MCF 10A (cell line): ENCODE measurements at regions of chr2 and their contacts with region 1.

Region 1: DNA sequence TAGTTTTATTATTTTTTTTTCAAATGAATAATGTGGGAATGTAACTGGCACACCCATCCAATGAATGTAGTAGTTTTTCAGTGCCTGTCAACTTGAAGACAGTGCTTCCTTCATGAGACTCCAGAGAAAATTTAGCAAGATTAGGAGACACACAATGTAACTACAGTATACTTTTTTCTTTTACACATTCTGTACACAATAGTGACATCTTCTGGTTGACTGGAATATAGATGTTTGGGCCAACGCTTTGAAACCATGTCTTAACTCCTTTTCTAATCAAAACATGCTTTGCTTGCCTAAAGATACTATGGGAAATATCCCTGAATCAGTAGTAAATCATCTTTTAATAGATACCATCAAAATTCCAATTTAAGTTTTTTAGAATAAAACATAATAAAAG is 229.5 kb upstream of the ZC3H15 start:
- DNase-seq: peak; percentile 60
- H3K4me3 Mint-ChIP-seq: no peak overlapping the region
- H3K27ac Mint-ChIP-seq: no peak overlapping the region
- H3K4me1 Mint-ChIP-seq: no peaks in the 10 kb centered on the region
- H3K27me3 Mint-ChIP-seq: no peaks in the 10 kb centered on the region
- CTCF ChIP-seq: peak; percentile 54

Region 2: GRCh38 chr2:185208261-185208660 is 1048.3 kb before region 1 on chr2:
- CTCF ChIA-PET with region 1: no interaction called
- POLR2A ChIA-PET with region 1: no interaction called
- intact Hi-C with region 1: loop called (anchors 1 kb)
- DNase-seq: peak; percentile 73
- H3K4me3 Mint-ChIP-seq: no peak overlapping the region
- H3K27ac Mint-ChIP-seq: no peak overlapping the region
- H3K4me1 Mint-ChIP-seq: no peaks in the 10 kb centered on the region
- H3K27me3 Mint-ChIP-seq: no peaks in the 10 kb centered on the region
- CTCF ChIP-seq: peak; percentile 50

Region 3: GRCh38 chr2:185608799-185609198 is 647.7 kb before region 1 on chr2:
- CTCF ChIA-PET with region 1: interaction called, 4 read pairs
- POLR2A ChIA-PET with region 1: no interaction called
- intact Hi-C with region 1: loop called (anchors 1 kb)
- DNase-seq: peak; percentile 45
- H3K4me3 Mint-ChIP-seq: no peak overlapping the region
- H3K27ac Mint-ChIP-seq: no peak overlapping the region
- H3K4me1 Mint-ChIP-seq: peaks cover 7% of the 10 kb centered on the region
- H3K27me3 Mint-ChIP-seq: no peaks in the 10 kb centered on the region
- CTCF ChIP-seq: peak; percentile 42

Region 4: GRCh38 chr2:185738679-185739472 is 517.7 kb before region 1 on chr2 and contains the start of gene FSIP2:
- CTCF ChIA-PET with region 1: interaction called, 3 read pairs
- POLR2A ChIA-PET with region 1: no interaction called
- intact Hi-C with region 1: loop called (anchors 5 kb)
- DNase-seq: peak; percentile 65
- H3K4me3 Mint-ChIP-seq: peak within 1 kb of the TSS; percentile 58
- H3K27ac Mint-ChIP-seq: no peak within 1 kb of the TSS
- H3K4me1 Mint-ChIP-seq: no peaks in the 10 kb centered on the region
- H3K27me3 Mint-ChIP-seq: no peaks in the 10 kb centered on the region
- CTCF ChIP-seq: peak; percentile 49
- total RNA-seq, gene FSIP2: 0.12 and 0.20 TPM in 2 replicates

Region 5: DNA sequence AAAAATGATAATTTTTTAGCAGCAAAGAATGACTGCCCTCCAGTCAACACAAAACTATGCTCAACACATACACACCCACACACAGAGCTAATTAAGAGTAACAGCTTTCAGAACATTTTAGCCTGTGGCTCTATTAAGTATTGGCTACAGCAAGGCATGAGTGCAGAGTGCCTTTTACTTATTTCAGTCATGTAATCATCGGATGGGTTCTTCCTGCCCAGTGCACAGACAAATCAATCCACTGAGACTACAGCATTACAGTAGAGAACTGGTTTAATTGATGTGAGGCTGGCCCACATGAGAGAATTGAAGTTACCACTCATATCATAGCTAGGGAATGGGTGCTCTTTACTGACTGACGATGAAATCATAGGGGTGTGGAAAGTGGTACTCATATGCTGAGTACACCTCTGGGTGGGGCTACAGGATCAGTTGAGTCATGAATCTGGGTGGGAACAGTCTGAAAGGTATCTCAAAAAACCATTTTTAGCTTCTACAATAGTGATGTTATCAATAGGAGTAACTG is 276.9 kb before region 1 on chr2:
- CTCF ChIA-PET with region 1: interaction called, 8 read pairs
- POLR2A ChIA-PET with region 1: no interaction called
- intact Hi-C with region 1: loop called (anchors 1 kb)
- DNase-seq: peak; percentile 66
- H3K4me3 Mint-ChIP-seq: no peak overlapping the region
- H3K27ac Mint-ChIP-seq: peak overlapping the region; percentile 43
- H3K4me1 Mint-ChIP-seq: peaks cover 17% of the 10 kb centered on the region
- H3K27me3 Mint-ChIP-seq: no peaks in the 10 kb centered on the region
- CTCF ChIP-seq: no peak

Region 6: DNA sequence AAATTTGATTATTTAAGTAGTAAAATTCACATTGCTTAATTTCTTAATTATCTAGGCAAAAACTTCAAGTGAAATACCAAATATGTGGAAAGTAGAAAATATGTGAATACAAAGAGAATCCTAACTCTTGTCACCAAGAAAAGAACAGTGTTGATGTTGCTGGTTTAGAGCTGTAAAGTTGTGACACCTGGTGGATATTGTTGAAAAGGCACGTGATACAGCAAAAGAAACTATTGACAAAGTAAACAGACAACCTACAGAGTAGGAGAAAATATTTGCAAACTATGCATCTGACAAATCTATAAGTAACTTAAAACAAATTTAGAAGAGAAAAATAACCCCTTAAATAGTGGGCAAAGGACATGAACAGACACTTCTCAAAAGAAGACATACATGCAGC is 203.9 kb after region 1 on chr2:
- CTCF ChIA-PET with region 1: interaction called, 9 read pairs
- POLR2A ChIA-PET with region 1: no interaction called
- intact Hi-C with region 1: loop called (anchors 2 kb)
- DNase-seq: peak; percentile 35
- H3K4me3 Mint-ChIP-seq: no peak overlapping the region
- H3K27ac Mint-ChIP-seq: no peak overlapping the region
- H3K4me1 Mint-ChIP-seq: no peaks in the 10 kb centered on the region
- H3K27me3 Mint-ChIP-seq: no peaks in the 10 kb centered on the region
- CTCF ChIP-seq: peak; percentile 39